ENCODE measurements at regions of chr16 and their contacts with region 1.

Region 1: GRCh38 chr16:15592324-15592723 is 50.6 kb downstream of the MARF1 start:
- DNase-seq: peak; percentile 41 to 42
- ATAC-seq: no peak
- H3K4me3 ChIP-seq: no peak overlapping the region
- H3K4me3 Mint-ChIP-seq: peak overlapping the region; percentile 50
- H3K27ac ChIP-seq: peak overlapping the region; percentile 5
- H3K27ac Mint-ChIP-seq: peak overlapping the region; percentile 83 to 96
- H3K4me1 ChIP-seq: peaks cover 57% of the 10 kb centered on the region
- H3K4me1 Mint-ChIP-seq: peaks cover 46 to 70% of the 10 kb centered on the region in 2 donors
- H3K27me3 ChIP-seq: no peaks in the 10 kb centered on the region
- H3K27me3 Mint-ChIP-seq: no peaks in the 10 kb centered on the region
- CTCF ChIP-seq: no peak

Region 2: DNA sequence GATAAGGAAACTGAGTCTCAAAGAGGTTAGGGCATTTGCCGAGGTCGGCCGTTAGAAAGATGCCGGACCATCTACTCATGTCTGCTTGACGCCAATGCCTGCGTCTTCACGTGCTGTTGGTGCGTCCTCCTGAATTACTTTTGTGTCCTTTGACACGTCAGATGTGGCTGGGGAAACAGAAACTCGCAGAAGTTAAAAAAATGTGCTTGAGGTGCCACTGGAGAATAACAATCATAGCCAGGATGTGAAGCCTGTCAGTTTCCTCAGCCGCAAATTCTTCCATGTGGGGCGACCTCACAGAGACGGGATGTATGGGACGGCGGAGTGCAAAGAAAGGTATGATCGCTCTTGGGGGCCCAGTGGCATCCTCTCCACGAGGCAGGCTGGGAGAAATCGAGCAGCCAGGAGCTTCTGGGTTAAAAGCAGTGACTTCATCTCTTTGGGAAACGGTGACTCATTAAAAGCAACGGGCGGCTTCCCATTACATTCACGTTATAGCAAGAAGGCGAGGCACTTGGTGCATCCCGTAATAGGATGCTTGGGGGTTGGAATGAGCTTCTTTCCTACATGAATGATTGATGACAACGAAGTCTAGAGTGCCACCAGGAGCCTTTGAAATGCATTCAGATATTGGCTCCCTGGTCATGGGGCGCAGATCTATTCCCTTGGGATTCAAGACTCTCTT is 90.1 kb before region 1 on chr16:
- intact Hi-C with region 1: no loop called
- DNase-seq: no peak
- ATAC-seq: no peak
- H3K4me3 ChIP-seq: no peak overlapping the region
- H3K4me3 Mint-ChIP-seq: no peak overlapping the region
- H3K27ac ChIP-seq: no peak overlapping the region
- H3K27ac Mint-ChIP-seq: no peak overlapping the region
- H3K4me1 ChIP-seq: no peaks in the 10 kb centered on the region
- H3K4me1 Mint-ChIP-seq: peaks cover 6% of the 10 kb centered on the region in 2 donors
- H3K27me3 ChIP-seq: no peaks in the 10 kb centered on the region
- H3K27me3 Mint-ChIP-seq: peaks cover 0 to 2% of the 10 kb centered on the region in 2 donors
- CTCF ChIP-seq: no peak

Region 3: DNA sequence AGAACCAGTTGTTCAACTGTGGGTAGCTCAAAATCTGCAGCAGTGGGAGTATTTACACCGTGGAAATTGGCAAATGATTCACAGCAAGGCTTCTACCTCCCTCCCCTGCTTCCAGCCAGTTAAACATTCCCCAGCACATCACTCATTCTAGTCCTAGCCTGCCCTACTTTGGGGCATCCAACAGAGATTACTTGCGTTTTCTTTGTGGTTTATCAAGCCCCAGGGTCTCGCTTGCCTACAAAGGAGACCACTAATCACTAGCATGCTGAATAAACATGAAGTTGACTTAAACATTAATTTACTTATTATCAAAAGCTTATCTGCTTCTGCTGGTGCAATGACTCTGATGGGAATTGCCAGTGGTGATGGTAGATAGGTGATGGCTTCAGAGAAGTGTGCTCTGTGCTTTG is 43.8 kb before region 1 on chr16:
- intact Hi-C with region 1: no loop called
- DNase-seq: no peak
- ATAC-seq: no peak
- H3K4me3 ChIP-seq: no peak overlapping the region
- H3K4me3 Mint-ChIP-seq: no peak overlapping the region
- H3K27ac ChIP-seq: no peak overlapping the region
- H3K27ac Mint-ChIP-seq: no peak overlapping the region
- H3K4me1 ChIP-seq: no peaks in the 10 kb centered on the region
- H3K4me1 Mint-ChIP-seq: peaks cover 0 to 5% of the 10 kb centered on the region in 2 donors
- H3K27me3 ChIP-seq: no peaks in the 10 kb centered on the region
- H3K27me3 Mint-ChIP-seq: no peaks in the 10 kb centered on the region
- CTCF ChIP-seq: no peak

Region 4: GRCh38 chr16:15575293-15576049 is 16.9 kb before region 1 on chr16:
- intact Hi-C with region 1: loop called (anchors 2 kb)
- DNase-seq: no peak
- ATAC-seq: peak in 2 of 3 donors; percentile 26 to 85
- H3K4me3 ChIP-seq: no peak overlapping the region
- H3K4me3 Mint-ChIP-seq: no peak overlapping the region
- H3K27ac ChIP-seq: no peak overlapping the region
- H3K27ac Mint-ChIP-seq: peak overlapping the region in 1 of 2 donors; percentile 81
- H3K4me1 ChIP-seq: no peaks in the 10 kb centered on the region
- H3K4me1 Mint-ChIP-seq: peaks cover 4 to 15% of the 10 kb centered on the region in 2 donors
- H3K27me3 ChIP-seq: no peaks in the 10 kb centered on the region
- H3K27me3 Mint-ChIP-seq: no peaks in the 10 kb centered on the region
- CTCF ChIP-seq: no peak